ENCODE measurements at regions of chr11 and their contacts with region 1.

Region 1: DNA sequence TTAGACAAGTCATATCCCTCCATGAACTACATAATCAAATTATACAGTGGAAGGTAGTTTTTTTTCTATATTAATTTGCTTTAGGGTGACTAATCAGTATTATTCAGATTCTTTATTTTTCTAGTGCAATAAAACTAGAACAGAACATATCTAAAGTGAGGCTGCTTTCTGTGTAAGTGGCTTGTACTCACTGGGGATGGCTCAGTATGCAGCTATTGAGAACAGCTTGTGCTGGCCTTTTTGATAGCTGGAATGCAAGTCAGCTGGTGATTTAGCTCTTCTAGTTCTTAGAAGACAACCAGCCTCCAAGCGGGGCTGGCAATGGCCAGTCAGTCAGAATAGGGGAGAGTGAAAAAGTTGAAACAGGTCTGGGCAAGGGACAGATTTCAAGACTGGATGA is 119.4 kb downstream of the BLID start:
- DNase-seq: no peak
- ATAC-seq: no peak
- H3K4me3 ChIP-seq: no peak overlapping the region
- H3K27ac ChIP-seq: no peak overlapping the region
- H3K4me1 ChIP-seq: no peaks in the 10 kb centered on the region
- H3K27me3 ChIP-seq: no peaks in the 10 kb centered on the region
- CTCF ChIP-seq: no peak

Region 2: GRCh38 chr11:122059565-122059964 is 63.0 kb after region 1 on chr11:
- CTCF ChIA-PET with region 1: no interaction called
- POLR2A ChIA-PET with region 1: no interaction called
- in situ Hi-C with region 1: no loop called
- intact Hi-C with region 1: no loop called
- DNase-seq: no peak
- ATAC-seq: no peak
- H3K4me3 ChIP-seq: no peak overlapping the region
- H3K27ac ChIP-seq: no peak overlapping the region
- H3K4me1 ChIP-seq: no peaks in the 10 kb centered on the region
- H3K27me3 ChIP-seq: no peaks in the 10 kb centered on the region
- CTCF ChIP-seq: no peak

Region 3: GRCh38 chr11:122085264-122085663 is 88.7 kb after region 1 on chr11:
- CTCF ChIA-PET with region 1: no interaction called
- POLR2A ChIA-PET with region 1: interaction called, 14 read pairs
- in situ Hi-C with region 1: no loop called
- intact Hi-C with region 1: no loop called
- DNase-seq: no peak
- ATAC-seq: 0 out of 2 replicates have a peak, but pooled peaks have one; percentile 10
- H3K4me3 ChIP-seq: no peak overlapping the region
- H3K27ac ChIP-seq: no peak overlapping the region
- H3K4me1 ChIP-seq: no peaks in the 10 kb centered on the region
- H3K27me3 ChIP-seq: no peaks in the 10 kb centered on the region
- CTCF ChIP-seq: no peak

Measured in Panc1 (cell line).